ENCODE measurements at regions of chr16 and their contacts with region 1.

Region 1: DNA sequence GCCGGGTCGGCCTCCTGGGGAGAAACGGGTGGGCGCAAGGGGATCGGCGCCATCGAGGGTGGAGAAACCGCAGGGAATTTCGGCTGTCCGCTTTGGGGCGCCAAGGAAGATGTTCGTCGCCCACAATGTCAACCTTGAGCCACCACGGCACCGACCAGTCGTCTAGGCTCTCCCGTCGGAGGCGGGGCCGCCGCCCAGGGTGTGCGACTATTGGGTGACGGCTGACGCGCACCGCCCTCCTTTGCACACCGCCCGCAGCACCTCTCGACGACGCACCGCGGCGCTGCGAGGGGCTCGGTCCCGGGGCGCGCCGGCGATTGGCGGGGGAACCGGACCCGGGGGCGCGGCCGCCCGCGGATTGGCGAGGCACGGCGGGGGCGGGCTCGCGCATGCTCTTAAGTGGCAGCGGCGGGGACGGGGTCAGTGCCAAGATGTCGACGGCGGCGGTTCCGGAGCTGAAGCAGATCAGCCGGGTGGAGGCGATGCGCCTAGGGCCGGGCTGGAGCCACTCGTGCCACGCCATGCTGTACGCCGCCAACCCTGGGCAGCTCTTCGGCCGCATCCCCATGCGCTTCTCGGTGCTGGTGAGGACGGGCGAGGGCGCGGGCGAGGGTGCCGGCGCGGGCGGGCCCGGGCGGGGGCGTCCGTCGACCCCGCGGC is at the start of gene NUDT16L1:
- DNase-seq: peak; percentile 93 to 99 (median 97)
- H3K4me3 ChIP-seq: peak within 1 kb of the TSS; percentile 65 to 100 (median 93)
- H3K27ac ChIP-seq: peak within 1 kb of the TSS; percentile 48 to 97 (median 89)
- H3K27me3 ChIP-seq: no peaks in the 10 kb centered on the region
- CTCF ChIP-seq: peak in 54 of 56 donors; percentile 13 to 82 (median 57)
- total RNA-seq, gene NUDT16L1: 29.9 to 65.8 (median 39.8) TPM

Region 2: GRCh38 chr16:4511441-4512082 is 181.9 kb before region 1 on chr16:
- intact Hi-C with region 1: loop called (anchors 5 to 10 kb)
- DNase-seq: peak; percentile 55 to 85 (median 74)
- H3K4me3 ChIP-seq: no peak overlapping the region
- H3K27ac ChIP-seq: peak overlapping the region in 55 of 59 donors; percentile 11 to 89 (median 77)
- H3K27me3 ChIP-seq: no peaks in the 10 kb centered on the region
- CTCF ChIP-seq: peak in 55 of 56 donors; percentile 32 to 75 (median 62)

Region 3: GRCh38 chr16:4624015-4624826 is 69.2 kb before region 1 on chr16 and contains the start of gene MGRN1:
- intact Hi-C with region 1: loop called in 1 of 2 experiments (anchors 5 kb)
- DNase-seq: peak; percentile 85 to 97 (median 94)
- H3K4me3 ChIP-seq: peak within 1 kb of the TSS; percentile 60 to 100 (median 96)
- H3K27ac ChIP-seq: peak within 1 kb of the TSS; percentile 68 to 99 (median 94)
- H3K27me3 ChIP-seq: no peaks in the 10 kb centered on the region
- CTCF ChIP-seq: peak; percentile 78 to 97 (median 90)
- total RNA-seq, gene MGRN1: 92.0 to 167 (median 124) TPM

Region 4: DNA sequence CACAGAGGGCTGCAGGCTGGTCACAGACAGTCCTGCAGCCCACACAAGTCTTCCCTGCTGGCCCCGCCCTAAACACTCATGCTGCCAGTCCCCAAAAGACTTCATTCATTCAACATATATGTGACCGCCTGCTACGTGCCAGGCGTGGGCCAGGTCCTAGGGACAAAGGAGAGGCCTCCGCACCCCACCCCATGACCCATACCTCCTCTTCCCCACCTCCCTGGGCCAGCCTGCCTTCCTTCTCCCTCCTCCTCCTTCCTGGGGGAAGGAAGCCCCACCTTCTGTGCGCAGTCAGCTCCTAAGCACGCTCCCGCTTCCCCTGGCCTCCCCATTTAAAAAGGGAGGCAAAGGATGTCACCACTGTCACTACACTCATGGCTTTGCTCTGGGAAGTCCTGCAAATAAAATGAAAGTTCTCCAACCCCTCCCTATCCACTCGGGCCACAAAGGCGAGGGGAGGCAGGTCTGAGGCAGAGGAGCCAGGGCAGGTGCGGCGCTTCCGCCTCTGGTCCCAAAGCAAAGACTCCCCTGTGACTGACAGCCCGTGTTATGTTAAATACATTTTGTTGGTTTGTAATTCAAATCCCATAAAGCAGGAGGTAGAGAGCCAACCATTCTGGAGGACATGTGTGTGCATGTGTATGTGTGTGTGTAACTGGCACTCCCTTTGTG is 49.9 kb after region 1 on chr16:
- intact Hi-C with region 1: no loop called
- DNase-seq: no peak
- H3K4me3 ChIP-seq: peak overlapping the region in 1 of 59 donors; percentile 29
- H3K27ac ChIP-seq: no peak overlapping the region
- H3K27me3 ChIP-seq: no peaks in the 10 kb centered on the region
- CTCF ChIP-seq: no peak

Region 5: DNA sequence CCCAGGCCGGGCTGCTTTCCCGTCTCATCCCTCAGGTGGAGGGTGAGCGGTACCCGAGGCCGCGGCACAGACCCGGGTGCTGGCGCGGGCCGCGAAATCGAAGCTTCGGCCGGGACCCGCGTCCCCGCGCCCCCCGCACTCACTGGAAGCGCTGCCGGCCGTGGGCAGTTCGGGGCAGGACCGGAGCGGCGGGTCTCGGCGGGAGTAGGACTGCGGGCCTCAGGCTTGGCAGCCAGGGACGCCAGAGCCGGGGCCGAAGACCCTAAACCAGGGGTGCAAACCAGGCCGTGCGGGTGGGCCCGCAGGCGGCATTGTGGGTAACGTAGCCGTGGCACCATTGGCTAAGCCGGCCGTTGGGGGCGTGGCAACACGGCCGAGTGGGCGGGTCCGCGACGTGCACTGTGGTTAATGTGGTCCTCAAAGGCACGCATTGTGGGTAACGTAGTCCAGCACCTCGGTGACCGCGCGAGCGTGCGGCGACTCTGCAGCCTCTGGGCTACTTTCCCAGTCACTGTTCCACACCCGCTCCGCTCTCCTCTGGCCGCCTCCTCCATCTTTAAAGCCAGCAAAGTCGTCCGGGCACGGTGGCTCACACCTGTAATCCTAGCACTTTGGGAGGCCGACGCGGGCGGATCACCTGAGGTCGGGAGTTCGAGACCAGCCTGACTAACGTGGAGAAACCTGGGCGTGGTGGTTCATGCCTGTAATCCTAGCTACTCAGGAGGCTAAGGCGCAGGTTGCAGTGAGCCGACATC is 73.6 kb after region 1 on chr16 and contains the start of gene ZNF500:
- intact Hi-C with region 1: loop called in 1 of 2 experiments (anchors 10 kb)
- DNase-seq: peak; percentile 98 to 100 (median 99)
- H3K4me3 ChIP-seq: peak within 1 kb of the TSS; percentile 43 to 100 (median 97)
- H3K27ac ChIP-seq: peak within 1 kb of the TSS; percentile 74 to 98 (median 92)
- H3K27me3 ChIP-seq: no peaks in the 10 kb centered on the region
- CTCF ChIP-seq: peak in 32 of 56 donors; percentile 12 to 58 (median 32)
- total RNA-seq, gene ZNF500: 15.4 to 45.7 (median 25.2) TPM

Region 6: DNA sequence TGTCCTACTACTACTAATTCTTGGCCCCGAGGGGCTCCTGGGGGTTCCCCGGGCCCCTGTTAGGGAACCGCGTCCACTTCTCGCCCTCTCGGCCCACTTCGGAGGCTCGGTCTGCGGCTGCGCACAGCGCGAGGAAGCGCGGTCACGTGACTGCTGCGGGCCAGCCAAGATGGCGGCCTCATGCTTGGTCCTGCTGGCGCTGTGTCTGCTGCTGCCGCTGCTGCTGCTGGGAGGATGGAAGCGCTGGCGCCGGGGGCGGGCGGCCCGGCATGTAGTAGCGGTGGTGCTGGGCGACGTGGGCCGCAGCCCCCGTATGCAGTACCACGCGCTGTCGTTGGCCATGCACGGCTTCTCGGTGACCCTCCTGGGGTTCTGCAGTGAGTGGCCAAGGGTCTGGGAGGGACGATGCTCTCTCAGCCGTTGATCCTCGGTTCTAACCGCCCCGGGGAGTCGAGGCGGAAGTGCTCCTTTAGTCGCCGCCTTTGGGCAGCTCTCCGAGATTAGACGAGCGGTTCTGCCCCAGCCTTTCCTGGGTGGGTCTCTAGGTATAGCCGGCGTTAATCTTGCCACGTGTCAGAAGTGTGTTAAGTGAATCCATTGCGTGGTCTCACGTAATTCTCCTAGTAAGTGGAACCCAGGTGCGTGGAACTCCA is 378.4 kb after region 1 on chr16 and contains the start of gene ALG1:
- intact Hi-C with region 1: loop called in 1 of 2 experiments (anchors 10 kb)
- DNase-seq: peak; percentile 83 to 94 (median 86)
- H3K4me3 ChIP-seq: peak within 1 kb of the TSS; percentile 54 to 95 (median 75)
- H3K27ac ChIP-seq: peak within 1 kb of the TSS; percentile 50 to 95 (median 89)
- H3K27me3 ChIP-seq: no peaks in the 10 kb centered on the region
- CTCF ChIP-seq: peak in 32 of 56 donors; percentile 4 to 53 (median 28)
- total RNA-seq, gene ALG1: 14.4 to 28.9 (median 21.0) TPM